ENCODE measurements at regions of chr11 and their contacts with region 1.

Region 1: GRCh38 chr11:73242251-73243079 is 24.4 kb downstream of the P2RY2 start:
- DNase-seq: peak; percentile 76
- ATAC-seq: peak; percentile 82
- H3K4me3 ChIP-seq: peak overlapping the region; percentile 48 to 74 (median 68); a peak in 5 of 6 replicates
- H3K27ac ChIP-seq: no peak overlapping the region
- H3K4me1 ChIP-seq: peaks cover 27% of the 10 kb centered on the region
- H3K27me3 ChIP-seq: no peaks in the 10 kb centered on the region; a peak in 2 of 5 replicates
- CTCF ChIP-seq: peak; percentile 94
- EP300 ChIP-seq: no peak
- POLR2A ChIP-seq: peak; percentile 47 to 54; a peak in 3 of 4 replicates
- RAD21 ChIP-seq: peak; percentile 86

Region 2: DNA sequence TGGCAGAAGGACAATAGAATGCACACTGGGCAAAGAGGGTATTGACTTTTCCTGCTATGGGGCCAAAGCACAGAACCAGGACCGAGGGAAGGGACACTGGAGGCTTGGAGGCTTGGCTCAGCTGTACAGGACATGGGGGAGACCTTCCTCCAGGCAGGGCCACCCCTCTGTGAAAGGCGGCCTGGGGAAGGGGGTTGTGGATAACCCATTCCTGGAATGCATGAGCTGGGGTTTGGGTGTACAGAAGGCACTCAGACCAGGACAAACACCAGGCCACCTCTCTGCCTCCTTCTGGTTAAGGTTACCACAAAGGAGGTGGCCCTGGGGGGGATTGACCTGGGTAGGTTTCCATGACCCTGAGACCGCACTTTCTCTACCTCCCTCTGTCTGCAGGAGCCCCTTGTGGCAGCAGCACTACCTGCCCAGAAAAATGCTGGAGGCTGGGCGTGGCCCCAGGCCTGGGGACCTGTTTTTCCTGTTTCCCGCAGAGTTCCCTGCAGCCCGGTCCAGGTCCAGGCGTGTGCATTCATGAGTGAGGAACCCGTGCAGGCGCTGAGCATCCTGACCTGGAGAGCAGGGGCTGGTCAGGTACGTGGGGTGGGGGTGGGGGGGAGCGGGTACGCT is 14.8 kb before region 1 on chr11:
- CTCF ChIA-PET with region 1: no interaction called
- POLR2A ChIA-PET with region 1: no interaction called
- in situ Hi-C with region 1: no loop called
- intact Hi-C with region 1: no loop called
- DNase-seq: no peak
- ATAC-seq: peak; percentile 18; the same call in 2 of the 3 replicates
- H3K4me3 ChIP-seq: no peak overlapping the region
- H3K27ac ChIP-seq: no peak overlapping the region
- H3K4me1 ChIP-seq: peaks cover 9% of the 10 kb centered on the region
- H3K27me3 ChIP-seq: peaks cover 0 to 4% of the 10 kb centered on the region in 2 experiments; a peak in 2 of 5 replicates
- CTCF ChIP-seq: no peak
- EP300 ChIP-seq: no peak
- POLR2A ChIP-seq: no peak
- RAD21 ChIP-seq: no peak

Region 3: GRCh38 chr11:73288873-73289707 is 46.6 kb after region 1 on chr11:
- CTCF ChIA-PET with region 1: interaction called, 19 read pairs
- POLR2A ChIA-PET with region 1: no interaction called
- in situ Hi-C with region 1: loop called (anchors 5 kb)
- intact Hi-C with region 1: loop called (anchors 1 kb)
- DNase-seq: peak; percentile 64
- ATAC-seq: peak; percentile 84
- H3K4me3 ChIP-seq: peak overlapping the region; percentile 55 to 82 (median 64)
- H3K27ac ChIP-seq: no peak overlapping the region
- H3K4me1 ChIP-seq: peaks cover 32% of the 10 kb centered on the region
- H3K27me3 ChIP-seq: peaks cover 6 to 43% of the 10 kb centered on the region in 2 experiments; a peak in 4 of 5 replicates
- CTCF ChIP-seq: peak; percentile 98
- EP300 ChIP-seq: no peak
- POLR2A ChIP-seq: peak in 1 of 2 experiments; percentile 45; a peak in 1 of 4 replicates
- RAD21 ChIP-seq: peak; percentile 96